Dorsolateral prefrontal cortex (tissue), 120 donors: ENCODE measurements at regions of chr5 and their contacts with region 1.

Region 1: DNA sequence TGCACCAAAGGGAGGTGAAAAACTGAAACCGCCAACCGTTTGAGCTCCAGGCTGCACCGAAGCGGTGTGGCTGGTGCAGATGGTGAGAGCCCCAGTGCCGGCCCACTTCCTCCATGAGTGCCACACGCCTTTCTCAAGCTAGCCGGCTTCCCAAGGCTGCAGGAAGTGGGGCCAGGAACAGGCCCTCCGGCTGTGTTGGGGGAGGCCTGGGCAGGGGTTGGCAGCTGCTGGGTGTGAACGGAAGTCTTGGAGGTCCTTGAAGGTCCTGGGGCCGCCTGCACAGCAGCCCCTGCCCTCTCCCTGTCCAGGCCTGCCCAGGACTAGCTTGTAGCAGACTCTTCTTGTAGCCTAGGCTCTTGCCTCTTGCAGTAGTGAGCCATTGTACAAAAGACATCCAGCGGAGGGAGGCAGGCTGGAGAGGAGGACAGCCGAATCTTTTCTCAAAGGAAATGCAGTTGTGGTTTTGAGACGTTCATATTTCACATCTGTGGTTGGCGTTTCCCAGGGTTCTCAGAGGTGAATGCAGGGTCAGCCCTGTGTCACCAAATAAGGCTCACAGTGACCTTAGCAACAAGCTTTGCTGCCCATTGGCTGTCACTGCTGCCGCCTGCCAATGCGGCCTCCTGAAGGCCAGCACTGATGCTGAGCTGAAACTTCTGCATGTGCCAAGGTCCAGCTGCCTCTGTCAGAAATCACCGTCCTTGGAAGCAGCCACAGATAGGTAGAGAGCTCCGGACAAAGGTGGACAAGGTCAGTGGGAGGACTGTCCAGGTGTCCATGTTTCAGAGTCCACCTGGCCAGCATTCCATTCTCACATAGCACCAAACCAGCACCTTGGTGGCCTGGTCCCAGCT is 23.9 kb downstream of the IRF1 start:
- DNase-seq: peak in 1 of 10 donors; percentile 51
- H3K4me3 ChIP-seq: no peak overlapping the region
- H3K27ac ChIP-seq: peak overlapping the region in 17 of 59 donors; percentile 5 to 52 (median 25)
- H3K27me3 ChIP-seq: no peaks in the 10 kb centered on the region
- CTCF ChIP-seq: no peak

Region 2: DNA sequence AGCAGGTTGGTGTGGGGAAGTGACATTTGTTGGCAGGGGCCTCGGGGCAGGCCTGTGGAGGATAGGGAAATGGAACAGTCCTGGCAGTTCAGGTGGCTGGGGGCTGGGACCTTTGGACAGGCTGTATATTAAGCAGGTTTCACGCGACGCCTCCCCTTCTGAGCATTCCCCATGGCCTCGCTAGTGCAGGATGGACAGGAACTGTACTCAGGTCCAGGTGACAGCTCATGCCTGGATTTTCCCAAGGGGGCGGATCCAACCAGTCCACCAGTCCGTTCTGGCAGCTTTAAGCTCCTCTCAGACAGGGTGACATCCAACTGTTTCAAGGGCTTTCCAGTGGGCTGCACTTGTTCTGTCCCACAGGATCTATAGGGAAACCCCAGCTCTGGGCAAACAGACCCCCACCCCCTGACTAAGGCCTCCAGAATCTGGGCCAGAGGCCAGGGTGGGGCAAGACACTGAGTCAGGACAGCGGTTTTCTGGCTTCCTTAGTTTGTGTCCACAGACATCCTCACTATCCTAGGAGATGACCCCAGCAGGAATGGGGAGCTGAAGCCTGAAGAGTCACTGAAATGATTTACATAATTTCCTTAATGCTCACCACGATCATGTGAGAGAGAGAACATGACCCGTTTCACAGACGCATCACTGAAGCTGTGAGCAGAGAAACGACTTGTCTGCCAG is 372.1 kb before region 1 on chr5:
- intact Hi-C with region 1: loop called in 1 of 2 experiments (anchors 5 kb)
- DNase-seq: no peak
- H3K4me3 ChIP-seq: no peak overlapping the region
- H3K27ac ChIP-seq: no peak overlapping the region
- H3K27me3 ChIP-seq: no peaks in the 10 kb centered on the region
- CTCF ChIP-seq: no peak